ENCODE measurements at regions of chrX and their contacts with region 1.

Region 1: GRCh38 chrX:108049649-108050048 is 4.8 kb downstream of the VSIG1 start:
- DNase-seq: no peak
- H3K4me3 ChIP-seq: no peak overlapping the region
- H3K27ac ChIP-seq: no peak overlapping the region
- H3K4me1 ChIP-seq: no peaks in the 10 kb centered on the region
- H3K27me3 ChIP-seq: peaks cover 4% of the 10 kb centered on the region
- CTCF ChIP-seq: no peak

Region 2: DNA sequence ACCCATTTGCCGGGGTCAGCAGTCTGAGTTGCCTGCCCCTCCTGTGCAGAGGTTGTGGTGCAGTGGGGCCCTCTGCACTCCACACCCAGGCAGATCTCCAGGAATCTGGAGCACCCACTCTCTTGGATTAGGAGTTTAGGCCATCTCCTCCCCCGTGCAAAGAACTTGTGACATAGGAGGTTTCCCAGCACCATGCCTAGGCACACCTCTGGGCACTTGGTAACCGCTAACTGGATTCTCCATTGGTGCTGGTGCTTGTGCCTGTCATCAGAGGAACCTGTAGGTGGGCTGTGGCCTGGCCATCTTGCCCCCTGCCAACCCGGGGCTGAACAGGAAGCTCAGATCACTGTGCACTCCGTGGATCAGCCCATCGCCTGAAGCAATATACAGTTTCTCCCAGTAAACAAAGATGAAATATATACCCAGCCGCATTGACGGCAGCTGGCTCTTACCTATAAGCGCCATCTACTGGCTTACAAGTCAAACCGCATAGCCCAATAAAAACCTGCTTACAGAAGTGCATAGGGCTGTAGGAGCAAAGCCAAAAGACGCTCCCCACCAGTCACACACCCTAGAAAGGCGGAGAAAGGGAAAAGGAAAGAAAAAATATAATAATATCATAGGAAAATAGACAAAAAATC is 48.4 kb before region 1 on chrX:
- CTCF ChIA-PET with region 1: no interaction called
- dilution Hi-C with region 1: loop called (anchors 5 kb)
- in situ Hi-C with region 1: no loop called
- intact Hi-C with region 1: no loop called
- DNase-seq: peak; percentile 14
- H3K4me3 ChIP-seq: peak overlapping the region in 1 of 3 experiments; percentile 22
- H3K27ac ChIP-seq: no peak overlapping the region
- H3K4me1 ChIP-seq: peaks cover 14% of the 10 kb centered on the region
- H3K27me3 ChIP-seq: no peaks in the 10 kb centered on the region
- CTCF ChIP-seq: peak; percentile 56 to 80